HCT116 (cell line): ENCODE measurements at regions of chr13 and their contacts with region 1.

Region 1: GRCh38 chr13:44435142-44435982 is 61.7 kb downstream of the SERP2 start:
- DNase-seq: peak; percentile 92
- ATAC-seq: peak; percentile 59
- H3K4me3 ChIP-seq: peak overlapping the region; percentile 90 to 94
- H3K27ac ChIP-seq: peak overlapping the region; percentile 91
- H3K4me1 ChIP-seq: peaks cover 33 to 66% of the 10 kb centered on the region in 2 experiments
- H3K27me3 ChIP-seq: no peaks in the 10 kb centered on the region
- CTCF ChIP-seq: no peak
- POLR2A ChIP-seq: peak; percentile 15
- RAD21 ChIP-seq: no peak

Region 2: DNA sequence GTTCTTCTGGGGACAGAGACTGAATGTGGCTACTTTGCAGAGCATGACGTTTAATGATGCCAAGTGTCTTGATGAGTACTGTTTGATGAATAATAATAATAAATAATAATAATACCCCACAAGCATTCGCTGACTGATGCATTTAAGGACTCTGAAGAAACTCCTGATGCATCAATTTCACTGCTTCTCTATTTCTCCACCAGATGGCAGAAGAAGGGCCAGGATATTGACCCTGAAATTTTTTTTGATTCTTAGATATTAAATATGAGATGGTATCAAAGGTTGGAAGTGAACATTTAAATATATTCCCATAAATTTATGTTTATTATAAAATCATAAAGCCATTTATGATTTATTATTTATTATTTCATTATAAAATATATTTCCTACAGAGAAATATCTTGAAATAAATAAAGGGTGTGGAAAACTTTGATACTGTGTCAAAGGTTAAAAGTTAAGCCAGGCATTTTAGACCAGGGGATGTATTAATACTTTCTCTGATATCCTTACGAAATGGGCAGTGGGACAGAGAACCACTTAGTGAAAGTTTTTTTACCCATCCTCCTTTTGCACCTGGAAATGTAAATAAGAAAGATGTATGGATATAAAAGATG is 384.8 kb before region 1 on chr13:
- CTCF ChIA-PET with region 1: interaction called, 9 read pairs
- POLR2A ChIA-PET with region 1: interaction called, 7 read pairs
- RAD21 ChIA-PET with region 1: no interaction called
- intact Hi-C with region 1: loop called (anchors 1 kb)
- DNase-seq: peak; percentile 32
- ATAC-seq: peak; percentile 54; the same call in 1 of the 2 replicates
- H3K4me3 ChIP-seq: no peak overlapping the region
- H3K27ac ChIP-seq: no peak overlapping the region
- H3K4me1 ChIP-seq: no peaks in the 10 kb centered on the region
- H3K27me3 ChIP-seq: no peaks in the 10 kb centered on the region
- CTCF ChIP-seq: peak; percentile 51 to 69 (median 67); a peak in 5 of 6 replicates
- POLR2A ChIP-seq: no peak
- RAD21 ChIP-seq: peak; percentile 78

Region 3: GRCh38 chr13:44191504-44192171 is 243.7 kb before region 1 on chr13:
- CTCF ChIA-PET with region 1: interaction called, 13 read pairs
- POLR2A ChIA-PET with region 1: interaction called, 18 read pairs
- RAD21 ChIA-PET with region 1: interaction called, 3 to 5 read pairs
- intact Hi-C with region 1: loop called (anchors 1 kb)
- DNase-seq: peak; percentile 81
- ATAC-seq: peak; percentile 93
- H3K4me3 ChIP-seq: 0 out of 4 replicates have a peak overlapping the region, but pooled peaks of 1 of the 2 experiments have one; percentile 21
- H3K27ac ChIP-seq: no peak overlapping the region
- H3K4me1 ChIP-seq: peaks cover 5 to 41% of the 10 kb centered on the region in 2 experiments
- H3K27me3 ChIP-seq: no peaks in the 10 kb centered on the region
- CTCF ChIP-seq: peak; percentile 47 to 73 (median 63); a peak in 5 of 6 replicates
- POLR2A ChIP-seq: no peak
- RAD21 ChIP-seq: peak; percentile 70

Region 4: GRCh38 chr13:44243198-44243857 is 192.0 kb before region 1 on chr13:
- CTCF ChIA-PET with region 1: interaction called, 27 read pairs
- POLR2A ChIA-PET with region 1: interaction called, 147 read pairs
- RAD21 ChIA-PET with region 1: interaction called, 15 to 19 read pairs
- intact Hi-C with region 1: loop called (anchors 1 kb)
- DNase-seq: peak; percentile 92
- ATAC-seq: peak; percentile 87
- H3K4me3 ChIP-seq: no peak overlapping the region
- H3K27ac ChIP-seq: peak overlapping the region; percentile 50
- H3K4me1 ChIP-seq: peaks cover 24 to 45% of the 10 kb centered on the region in 2 experiments
- H3K27me3 ChIP-seq: no peaks in the 10 kb centered on the region
- CTCF ChIP-seq: peak in 2 of 3 experiments; percentile 66 to 73; a peak in 4 of 6 replicates
- POLR2A ChIP-seq: no peak
- RAD21 ChIP-seq: no peak

Region 5: DNA sequence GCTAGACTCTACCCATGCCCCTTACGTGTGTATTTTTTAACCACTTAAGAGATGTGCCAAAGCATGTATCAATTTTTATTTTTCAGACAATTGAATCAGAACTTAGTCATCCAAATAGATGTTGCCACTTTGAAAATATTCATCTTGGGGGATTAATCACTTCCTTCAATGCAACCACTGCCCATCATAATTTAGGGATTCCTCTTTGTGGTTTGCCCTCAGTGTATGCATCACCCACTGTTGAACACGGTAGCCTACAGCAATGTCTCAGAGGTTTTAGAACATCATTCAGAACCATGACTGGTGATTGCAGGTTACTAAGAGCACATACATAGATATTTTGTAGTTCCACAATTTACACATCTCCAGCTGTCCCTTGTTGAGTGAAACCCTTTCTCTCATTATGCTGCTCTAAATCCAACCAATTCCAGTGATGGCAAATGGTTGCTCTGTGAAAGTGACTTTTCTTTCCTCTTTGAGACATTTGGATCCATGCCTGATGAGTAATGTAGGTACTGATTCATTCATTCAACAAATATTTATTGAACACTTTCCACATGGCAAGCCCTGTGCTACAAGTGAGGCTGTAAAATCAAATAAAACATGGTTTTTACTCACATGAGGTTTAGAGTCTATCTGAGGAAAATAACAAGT is 122.3 kb before region 1 on chr13:
- CTCF ChIA-PET with region 1: interaction called, 3 read pairs
- POLR2A ChIA-PET with region 1: interaction called, 172 read pairs
- RAD21 ChIA-PET with region 1: no interaction called
- intact Hi-C with region 1: loop called (anchors 1 kb)
- DNase-seq: peak; percentile 88
- ATAC-seq: peak; percentile 79
- H3K4me3 ChIP-seq: peak overlapping the region in 1 of 2 experiments; percentile 32; a peak in 2 of 4 replicates
- H3K27ac ChIP-seq: peak overlapping the region; percentile 83
- H3K4me1 ChIP-seq: peaks cover 51 to 80% of the 10 kb centered on the region in 2 experiments
- H3K27me3 ChIP-seq: no peaks in the 10 kb centered on the region
- CTCF ChIP-seq: no peak
- POLR2A ChIP-seq: no peak
- RAD21 ChIP-seq: no peak

Region 6: DNA sequence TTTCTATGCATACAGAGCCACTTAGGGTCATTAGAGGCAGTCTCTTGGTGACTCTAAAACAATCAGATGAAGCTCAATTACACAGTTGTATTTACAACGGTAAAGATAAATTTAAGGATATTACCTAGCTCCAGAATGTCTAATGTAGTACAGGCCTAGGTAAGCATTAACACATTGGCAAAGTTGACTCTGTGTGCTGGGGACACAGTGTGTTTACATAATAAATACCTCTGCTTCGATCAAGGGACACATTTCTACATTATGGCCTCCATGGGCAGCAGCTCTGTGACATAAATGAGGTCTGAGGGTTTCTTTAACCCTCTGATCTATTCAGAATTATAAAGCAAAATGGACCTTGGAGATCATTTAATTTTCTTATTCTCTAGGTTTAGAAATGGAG is 13.0 kb after region 1 on chr13:
- CTCF ChIA-PET with region 1: no interaction called
- POLR2A ChIA-PET with region 1: interaction called, 13 read pairs
- RAD21 ChIA-PET with region 1: interaction called, 4 to 8 read pairs
- intact Hi-C with region 1: no loop called
- DNase-seq: no peak
- ATAC-seq: no peak
- H3K4me3 ChIP-seq: no peak overlapping the region
- H3K27ac ChIP-seq: no peak overlapping the region
- H3K4me1 ChIP-seq: peaks cover 0 to 9% of the 10 kb centered on the region in 2 experiments; a peak in 2 of 4 replicates
- H3K27me3 ChIP-seq: no peaks in the 10 kb centered on the region
- CTCF ChIP-seq: no peak
- POLR2A ChIP-seq: no peak
- RAD21 ChIP-seq: no peak

Region 7: DNA sequence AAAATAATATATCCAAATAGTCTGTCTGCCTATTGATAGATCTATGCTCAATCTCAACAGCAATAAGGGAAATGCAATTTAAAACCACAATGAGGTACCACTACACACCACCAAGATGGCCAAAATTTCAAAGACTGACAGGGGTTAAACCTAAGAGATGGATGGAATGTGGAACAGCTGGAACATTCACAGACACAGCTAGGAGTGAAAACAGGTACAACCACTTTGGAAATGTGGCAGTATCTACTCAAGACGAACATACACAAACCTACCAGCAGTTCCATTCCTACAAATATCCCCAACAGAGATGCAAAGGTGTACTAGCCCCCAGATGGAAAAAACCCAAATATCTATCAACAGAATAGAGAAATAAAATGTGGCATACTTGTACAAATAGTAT is 54.4 kb after region 1 on chr13:
- CTCF ChIA-PET with region 1: no interaction called
- POLR2A ChIA-PET with region 1: no interaction called
- RAD21 ChIA-PET with region 1: no interaction called
- intact Hi-C with region 1: no loop called
- DNase-seq: no peak
- ATAC-seq: no peak
- H3K4me3 ChIP-seq: no peak overlapping the region
- H3K27ac ChIP-seq: no peak overlapping the region
- H3K4me1 ChIP-seq: no peaks in the 10 kb centered on the region
- H3K27me3 ChIP-seq: no peaks in the 10 kb centered on the region
- CTCF ChIP-seq: no peak
- POLR2A ChIP-seq: no peak
- RAD21 ChIP-seq: no peak